Mammary epithelial cell (primary cell): ENCODE measurements at regions of chr15 and their contacts with region 1.

Region 1: DNA sequence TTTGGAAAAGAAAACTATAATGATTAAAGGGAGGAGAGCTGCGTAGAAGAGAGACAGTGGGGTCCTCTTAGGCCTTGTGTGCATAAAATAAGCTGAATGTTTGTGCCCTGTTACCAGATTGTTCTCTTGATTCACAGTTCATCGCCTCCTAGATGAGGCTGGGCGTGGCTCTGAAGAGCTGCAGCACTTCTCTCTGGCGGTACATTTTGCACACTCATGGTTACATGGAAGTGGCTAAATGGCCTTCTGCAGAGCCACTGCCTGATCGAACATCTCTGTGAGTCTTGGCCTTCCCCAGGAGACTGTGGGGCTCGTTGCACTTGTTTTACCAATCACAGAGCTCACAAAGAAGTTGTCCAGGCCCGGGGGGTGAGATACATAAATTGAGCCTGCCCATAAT is 208.8 kb downstream of the GABRG3 start:
- DNase-seq: no peak
- H3K4me3 ChIP-seq: no peak overlapping the region
- H3K27ac ChIP-seq: no peak overlapping the region
- H3K4me1 ChIP-seq: no peaks in the 10 kb centered on the region
- H3K27me3 ChIP-seq: no peaks in the 10 kb centered on the region
- CTCF ChIP-seq: no peak

Region 2: GRCh38 chr15:26287381-26287780 is 892.4 kb before region 1 on chr15:
- CTCF ChIA-PET with region 1: no interaction called
- dilution Hi-C with region 1: no loop called
- in situ Hi-C with region 1: no loop called
- intact Hi-C with region 1: no loop called
- DNase-seq: no peak
- H3K4me3 ChIP-seq: no peak overlapping the region
- H3K27ac ChIP-seq: no peak overlapping the region
- H3K4me1 ChIP-seq: no peaks in the 10 kb centered on the region
- H3K27me3 ChIP-seq: no peaks in the 10 kb centered on the region
- CTCF ChIP-seq: no peak

Region 3: GRCh38 chr15:27124287-27124871 is 55.4 kb before region 1 on chr15:
- CTCF ChIA-PET with region 1: no interaction called
- dilution Hi-C with region 1: loop called (anchors 5 kb)
- in situ Hi-C with region 1: no loop called
- intact Hi-C with region 1: no loop called
- DNase-seq: no peak
- H3K4me3 ChIP-seq: no peak overlapping the region
- H3K27ac ChIP-seq: no peak overlapping the region
- H3K4me1 ChIP-seq: no peaks in the 10 kb centered on the region
- H3K27me3 ChIP-seq: no peaks in the 10 kb centered on the region
- CTCF ChIP-seq: no peak

Region 4: DNA sequence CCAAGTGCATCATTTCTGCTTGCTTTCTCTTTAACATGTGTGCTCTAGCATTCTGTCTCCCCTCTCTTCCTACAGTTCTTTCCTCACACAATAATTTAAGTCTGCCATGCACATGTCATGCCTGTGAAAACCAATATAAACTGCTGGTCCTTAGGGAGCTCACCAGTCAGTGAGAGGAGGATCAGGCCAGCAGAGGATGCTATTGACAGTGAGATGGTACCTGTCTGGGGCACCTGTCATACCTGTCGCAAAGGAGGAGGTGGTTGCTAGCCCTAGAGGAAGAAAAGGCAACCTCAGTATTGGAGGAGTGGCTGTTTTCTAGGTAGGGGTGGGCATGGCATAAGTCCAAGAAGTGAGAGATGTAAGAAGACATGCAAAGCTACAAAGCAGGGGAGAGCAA is 14.2 kb before region 1 on chr15:
- CTCF ChIA-PET with region 1: no interaction called
- dilution Hi-C with region 1: no loop called
- in situ Hi-C with region 1: no loop called
- intact Hi-C with region 1: no loop called
- DNase-seq: no peak
- H3K4me3 ChIP-seq: no peak overlapping the region
- H3K27ac ChIP-seq: no peak overlapping the region
- H3K4me1 ChIP-seq: no peaks in the 10 kb centered on the region
- H3K27me3 ChIP-seq: no peaks in the 10 kb centered on the region
- CTCF ChIP-seq: no peak

Region 5: DNA sequence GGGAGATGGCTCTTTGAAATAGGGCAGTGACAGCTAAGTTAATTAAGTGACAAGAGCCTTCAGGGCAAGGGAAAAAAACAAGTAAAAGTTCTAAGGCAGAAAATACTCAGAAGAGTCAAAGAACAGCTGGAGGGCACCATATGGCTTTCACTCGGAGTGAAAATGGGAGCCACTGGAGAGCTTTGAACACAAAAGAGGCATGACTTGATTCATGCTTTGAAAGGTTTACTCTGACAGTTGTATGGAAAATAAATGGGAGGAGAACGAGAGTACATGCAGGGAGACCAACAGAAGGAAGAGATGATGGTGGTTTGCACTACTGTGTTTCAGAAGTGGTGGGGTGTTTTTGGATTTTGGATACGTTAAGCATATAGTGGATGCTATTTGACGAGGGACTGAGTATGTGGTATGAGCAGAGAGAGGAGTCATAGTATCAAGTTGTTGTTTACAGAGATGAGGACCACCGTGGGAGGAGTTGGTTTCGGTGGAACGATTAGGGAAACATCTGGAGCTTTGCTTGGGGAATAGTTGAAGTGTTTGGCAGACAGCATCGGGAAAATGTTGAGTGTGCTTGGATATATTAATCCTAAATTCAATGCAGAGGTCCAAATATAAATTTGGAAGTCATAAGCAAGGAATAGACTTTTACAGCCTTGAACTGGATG is 202.7 kb after region 1 on chr15:
- CTCF ChIA-PET with region 1: no interaction called
- dilution Hi-C with region 1: no loop called
- in situ Hi-C with region 1: no loop called
- intact Hi-C with region 1: no loop called
- DNase-seq: no peak
- H3K4me3 ChIP-seq: no peak overlapping the region
- H3K27ac ChIP-seq: no peak overlapping the region
- H3K4me1 ChIP-seq: no peaks in the 10 kb centered on the region
- H3K27me3 ChIP-seq: no peaks in the 10 kb centered on the region
- CTCF ChIP-seq: no peak